Panc1 (cell line): ENCODE measurements at regions of chr2 and their contacts with region 1.

Region 1: GRCh38 chr2:74178201-74179062 is at the start of gene MOB1A:
- DNase-seq: peak; percentile 97
- ATAC-seq: peak; percentile 99
- H3K4me3 ChIP-seq: peak within 1 kb of the TSS; percentile 81 to 83
- H3K27ac ChIP-seq: peak within 1 kb of the TSS; percentile 91
- H3K4me1 ChIP-seq: no peaks in the 10 kb centered on the region
- H3K27me3 ChIP-seq: no peaks in the 10 kb centered on the region
- CTCF ChIP-seq: no peak
- total RNA-seq, gene MOB1A: 184 TPM

Region 2: GRCh38 chr2:73828818-73829570 is 349.4 kb before region 1 on chr2 and contains the start of gene STAMBP:
- CTCF ChIA-PET with region 1: interaction called, 14 read pairs
- POLR2A ChIA-PET with region 1: interaction called, 3 read pairs
- in situ Hi-C with region 1: no loop called
- intact Hi-C with region 1: no loop called
- DNase-seq: peak; percentile 91
- ATAC-seq: peak; percentile 98
- H3K4me3 ChIP-seq: peak within 1 kb of the TSS; percentile 72 to 85
- H3K27ac ChIP-seq: peak within 1 kb of the TSS; percentile 90
- H3K4me1 ChIP-seq: peaks cover 14% of the 10 kb centered on the region
- H3K27me3 ChIP-seq: no peaks in the 10 kb centered on the region
- CTCF ChIP-seq: no peak
- total RNA-seq, gene STAMBP: 49.0 TPM

Region 3: DNA sequence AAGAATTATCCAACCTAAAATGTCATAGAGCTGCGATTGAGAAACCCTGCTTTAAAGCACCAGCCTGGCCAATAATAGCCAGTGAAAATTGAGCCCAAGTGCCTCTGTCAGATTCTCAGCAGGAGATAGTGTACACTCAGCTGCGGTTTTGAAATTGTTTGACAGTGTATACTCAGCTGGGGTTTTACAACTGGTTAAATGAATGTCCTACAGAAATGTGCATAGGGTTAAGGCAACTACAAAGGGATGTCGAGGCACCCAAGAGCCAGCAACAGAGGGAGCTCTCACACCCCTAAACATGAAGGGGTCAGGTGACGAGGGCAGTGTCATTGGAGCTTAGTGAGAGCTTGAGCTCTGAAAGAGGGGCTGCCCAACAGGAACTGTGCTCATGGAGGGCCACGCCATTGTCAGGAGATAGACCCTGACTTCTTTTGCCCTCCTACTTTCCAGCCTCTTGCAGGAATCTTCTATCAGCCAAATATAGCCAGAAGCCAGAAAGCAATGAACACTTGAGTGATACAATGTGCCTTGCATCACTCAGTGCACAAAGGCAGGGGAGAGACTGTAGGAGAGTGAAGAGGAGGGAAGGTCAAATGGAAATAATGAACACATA is 270.5 kb before region 1 on chr2:
- CTCF ChIA-PET with region 1: no interaction called
- POLR2A ChIA-PET with region 1: interaction called, 10 read pairs
- in situ Hi-C with region 1: no loop called
- intact Hi-C with region 1: no loop called
- DNase-seq: peak; percentile 22
- ATAC-seq: peak; percentile 75
- H3K4me3 ChIP-seq: no peak overlapping the region
- H3K27ac ChIP-seq: no peak overlapping the region
- H3K4me1 ChIP-seq: 0 out of 2 replicates have a peak, but pooled peaks cover 4% of the 10 kb centered on the region
- H3K27me3 ChIP-seq: no peaks in the 10 kb centered on the region
- CTCF ChIP-seq: no peak; the same call in 1 of the 2 replicates

Region 4: GRCh38 chr2:74226648-74227213 is 48.3 kb after region 1 on chr2:
- CTCF ChIA-PET with region 1: no interaction called
- POLR2A ChIA-PET with region 1: no interaction called
- in situ Hi-C with region 1: no loop called
- intact Hi-C with region 1: no loop called
- DNase-seq: no peak
- ATAC-seq: no peak
- H3K4me3 ChIP-seq: no peak overlapping the region
- H3K27ac ChIP-seq: no peak overlapping the region
- H3K4me1 ChIP-seq: peaks cover 9% of the 10 kb centered on the region; the same call in 1 of the 2 replicates
- H3K27me3 ChIP-seq: no peaks in the 10 kb centered on the region
- CTCF ChIP-seq: no peak

Region 5: GRCh38 chr2:74321737-74322136 is 143.3 kb after region 1 on chr2:
- CTCF ChIA-PET with region 1: no interaction called
- POLR2A ChIA-PET with region 1: no interaction called
- in situ Hi-C with region 1: no loop called
- intact Hi-C with region 1: no loop called
- DNase-seq: no peak
- ATAC-seq: no peak
- H3K4me3 ChIP-seq: no peak overlapping the region
- H3K27ac ChIP-seq: no peak overlapping the region
- H3K4me1 ChIP-seq: no peaks in the 10 kb centered on the region
- H3K27me3 ChIP-seq: no peaks in the 10 kb centered on the region; the same call in 1 of the 2 replicates
- CTCF ChIP-seq: no peak

Region 6: DNA sequence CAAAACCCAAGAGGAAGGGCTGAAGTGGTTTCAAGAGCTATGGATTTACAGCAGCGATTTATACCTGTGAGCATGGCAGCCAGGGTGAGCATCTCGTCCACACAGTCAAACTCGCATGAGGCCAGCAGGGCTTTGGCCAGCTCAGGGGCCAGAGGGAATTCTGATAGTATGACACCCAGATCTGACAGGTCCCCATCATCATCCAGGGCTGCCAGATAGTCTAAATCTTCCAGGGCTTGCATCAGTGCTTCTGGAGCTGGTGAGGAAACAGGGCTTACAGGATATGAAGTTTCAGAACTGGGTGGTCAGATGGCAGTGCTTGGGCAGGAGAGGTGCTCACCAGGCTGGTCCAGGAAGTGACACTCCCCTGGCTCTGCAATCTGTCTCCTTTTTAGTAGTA is 344.1 kb after region 1 on chr2:
- CTCF ChIA-PET with region 1: no interaction called
- POLR2A ChIA-PET with region 1: interaction called, 11 read pairs
- in situ Hi-C with region 1: no loop called
- intact Hi-C with region 1: no loop called
- DNase-seq: no peak
- ATAC-seq: no peak
- H3K4me3 ChIP-seq: no peak overlapping the region
- H3K27ac ChIP-seq: no peak overlapping the region
- H3K4me1 ChIP-seq: no peaks in the 10 kb centered on the region
- H3K27me3 ChIP-seq: no peaks in the 10 kb centered on the region
- CTCF ChIP-seq: no peak